CD8-positive, alpha-beta T cell (primary cell): ENCODE measurements at regions of chr2 and their contacts with region 1.

Region 1: GRCh38 chr2:97728091-97728731 is 14.8 kb downstream of the ZAP70 start:
- DNase-seq: peak in 5 of 9 experiments; percentile 38 to 63 (median 54)
- ATAC-seq: peak; percentile 76
- H3K4me3 ChIP-seq: no peak overlapping the region
- H3K4me3 Mint-ChIP-seq: no peak overlapping the region
- H3K27ac ChIP-seq: peak overlapping the region; percentile 13 to 32
- H3K27ac Mint-ChIP-seq: peak overlapping the region; percentile 90
- H3K4me1 ChIP-seq: peaks cover 66% of the 10 kb centered on the region
- H3K4me1 Mint-ChIP-seq: peaks cover 77% of the 10 kb centered on the region
- H3K27me3 ChIP-seq: no peaks in the 10 kb centered on the region
- H3K27me3 Mint-ChIP-seq: no peaks in the 10 kb centered on the region
- CTCF ChIP-seq: no peak

Region 2: GRCh38 chr2:97710596-97711386 is 17.4 kb before region 1 on chr2:
- CTCF ChIA-PET with region 1: interaction called, 12 read pairs
- POLR2A ChIA-PET with region 1: interaction called, 13 read pairs
- intact Hi-C with region 1: no loop called
- DNase-seq: peak in 1 of 9 experiments; percentile 50
- ATAC-seq: no peak
- H3K4me3 ChIP-seq: no peak overlapping the region
- H3K4me3 Mint-ChIP-seq: no peak overlapping the region
- H3K27ac ChIP-seq: peak overlapping the region in 1 of 2 experiments; percentile 15
- H3K27ac Mint-ChIP-seq: peak overlapping the region; percentile 55
- H3K4me1 ChIP-seq: peaks cover 51% of the 10 kb centered on the region
- H3K4me1 Mint-ChIP-seq: peaks cover 55% of the 10 kb centered on the region
- H3K27me3 ChIP-seq: no peaks in the 10 kb centered on the region
- H3K27me3 Mint-ChIP-seq: no peaks in the 10 kb centered on the region
- CTCF ChIP-seq: no peak

Region 3: DNA sequence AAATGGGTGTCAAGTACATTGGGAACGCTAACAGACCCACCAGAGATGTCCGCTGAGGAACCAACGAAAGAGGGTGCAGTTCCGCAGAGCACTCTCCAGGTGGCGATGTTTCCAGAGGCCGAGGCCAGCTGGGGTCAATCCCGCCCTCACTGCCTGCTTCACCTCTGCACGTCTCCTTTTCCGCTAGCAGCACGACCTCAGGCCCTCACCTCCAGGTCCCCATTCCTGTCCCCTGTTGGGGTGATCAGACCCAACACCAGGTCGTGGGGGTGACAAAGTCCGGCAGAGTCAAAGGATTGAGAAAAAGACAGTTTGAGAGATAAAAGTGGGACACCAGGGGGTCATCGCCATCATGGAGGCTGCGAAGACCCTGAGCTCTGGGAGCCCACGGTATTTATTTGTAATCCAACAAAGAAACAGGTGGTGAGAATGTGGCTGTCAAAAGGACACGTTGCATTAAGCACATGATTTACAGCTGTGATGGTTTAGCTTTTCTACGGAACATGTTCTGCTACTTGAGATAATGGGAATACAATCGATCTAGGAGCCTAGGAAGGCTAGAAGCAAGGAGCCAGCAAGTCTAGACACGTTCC is 12.5 kb after region 1 on chr2:
- CTCF ChIA-PET with region 1: interaction called, 25 read pairs
- POLR2A ChIA-PET with region 1: interaction called, 8 read pairs
- intact Hi-C with region 1: no loop called
- DNase-seq: peak in 4 of 9 experiments; percentile 37 to 70 (median 54)
- ATAC-seq: peak; percentile 55
- H3K4me3 ChIP-seq: no peak overlapping the region
- H3K4me3 Mint-ChIP-seq: no peak overlapping the region
- H3K27ac ChIP-seq: peak overlapping the region in 1 of 2 experiments; percentile 68
- H3K27ac Mint-ChIP-seq: peak overlapping the region; percentile 77
- H3K4me1 ChIP-seq: peaks cover 36% of the 10 kb centered on the region
- H3K4me1 Mint-ChIP-seq: peaks cover 59% of the 10 kb centered on the region
- H3K27me3 ChIP-seq: no peaks in the 10 kb centered on the region
- H3K27me3 Mint-ChIP-seq: no peaks in the 10 kb centered on the region
- CTCF ChIP-seq: peak; percentile 61

Region 4: DNA sequence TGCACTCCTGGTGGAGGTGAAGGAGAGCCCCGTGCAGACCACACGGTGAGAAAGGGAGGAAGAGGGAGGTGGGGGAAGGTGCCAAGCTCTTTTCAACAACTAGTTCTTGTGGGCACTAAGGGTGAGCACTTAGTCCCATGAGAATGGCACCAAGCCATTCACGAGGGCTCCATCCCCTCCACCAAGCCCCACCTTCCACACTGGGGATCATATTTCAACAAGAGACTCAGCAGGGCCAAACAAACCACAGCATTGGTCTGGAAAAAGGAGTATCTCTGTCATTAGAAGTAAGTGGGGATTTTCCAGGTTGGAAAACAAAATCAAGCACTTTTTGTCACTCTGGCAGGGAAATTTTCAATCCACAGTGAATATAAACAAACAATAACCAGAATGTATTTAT is 23.5 kb after region 1 on chr2:
- CTCF ChIA-PET with region 1: interaction called, 10 read pairs
- POLR2A ChIA-PET with region 1: no interaction called
- intact Hi-C with region 1: no loop called
- DNase-seq: no peak
- ATAC-seq: no peak
- H3K4me3 ChIP-seq: no peak overlapping the region
- H3K4me3 Mint-ChIP-seq: no peak overlapping the region
- H3K27ac ChIP-seq: no peak overlapping the region
- H3K27ac Mint-ChIP-seq: no peak overlapping the region
- H3K4me1 ChIP-seq: peaks cover 20% of the 10 kb centered on the region
- H3K4me1 Mint-ChIP-seq: peaks cover 23% of the 10 kb centered on the region
- H3K27me3 ChIP-seq: no peaks in the 10 kb centered on the region
- H3K27me3 Mint-ChIP-seq: no peaks in the 10 kb centered on the region
- CTCF ChIP-seq: no peak